ENCODE measurements at regions of chr12 and their contacts with region 1.

Region 1: GRCh38 chr12:120971299-120972179 is 6.8 kb upstream of the HNF1A start:
- DNase-seq: peak in 2 of 5 donors; percentile 68 to 80
- H3K4me3 ChIP-seq: no peak overlapping the region
- H3K27ac ChIP-seq: no peak overlapping the region
- H3K4me1 ChIP-seq: peaks cover 0 to 23% (median 11%) of the 10 kb centered on the region in 3 donors
- H3K27me3 ChIP-seq: no peaks in the 10 kb centered on the region
- CTCF ChIP-seq: peak; percentile 70

Region 2: GRCh38 chr12:120737557-120738251 is 233.8 kb before region 1 on chr12:
- intact Hi-C with region 1: loop called (anchors 10 kb)
- DNase-seq: peak in 1 of 5 donors; percentile 31
- H3K4me3 ChIP-seq: no peak overlapping the region
- H3K27ac ChIP-seq: no peak overlapping the region
- H3K4me1 ChIP-seq: no peaks in the 10 kb centered on the region
- H3K27me3 ChIP-seq: no peaks in the 10 kb centered on the region
- CTCF ChIP-seq: no peak

Measured in kidney (tissue), 22 donors.